CD8-positive, alpha-beta T cell (primary cell): ENCODE measurements at regions of chr1 and their contacts with region 1.

Region 1: DNA sequence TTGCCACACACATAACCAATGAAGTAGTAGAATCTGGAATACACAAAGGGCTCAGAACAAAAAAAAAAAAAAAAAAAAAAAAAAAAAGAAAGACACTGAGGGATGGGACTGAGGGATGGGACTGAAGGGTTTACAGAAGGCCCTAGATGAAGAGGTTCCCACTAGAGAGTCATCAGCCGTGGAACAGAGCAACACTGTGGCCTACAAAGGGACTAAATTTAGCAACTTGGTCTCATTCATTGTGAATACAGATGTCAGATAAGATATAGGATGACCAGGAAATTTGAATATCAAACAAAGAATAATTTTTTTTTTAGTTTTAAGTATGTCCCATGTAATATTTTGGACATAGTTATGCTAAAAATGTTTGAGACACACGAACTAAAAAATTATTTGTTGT is 62.1 kb downstream of the GLUL start:
- DNase-seq: no peak
- ATAC-seq: no peak
- H3K4me3 ChIP-seq: no peak overlapping the region
- H3K4me3 Mint-ChIP-seq: no peak overlapping the region
- H3K27ac ChIP-seq: no peak overlapping the region
- H3K27ac Mint-ChIP-seq: no peak overlapping the region
- H3K4me1 ChIP-seq: no peaks in the 10 kb centered on the region
- H3K4me1 Mint-ChIP-seq: no peaks in the 10 kb centered on the region
- H3K27me3 ChIP-seq: no peaks in the 10 kb centered on the region
- H3K27me3 Mint-ChIP-seq: no peaks in the 10 kb centered on the region
- CTCF ChIP-seq: no peak

Region 2: DNA sequence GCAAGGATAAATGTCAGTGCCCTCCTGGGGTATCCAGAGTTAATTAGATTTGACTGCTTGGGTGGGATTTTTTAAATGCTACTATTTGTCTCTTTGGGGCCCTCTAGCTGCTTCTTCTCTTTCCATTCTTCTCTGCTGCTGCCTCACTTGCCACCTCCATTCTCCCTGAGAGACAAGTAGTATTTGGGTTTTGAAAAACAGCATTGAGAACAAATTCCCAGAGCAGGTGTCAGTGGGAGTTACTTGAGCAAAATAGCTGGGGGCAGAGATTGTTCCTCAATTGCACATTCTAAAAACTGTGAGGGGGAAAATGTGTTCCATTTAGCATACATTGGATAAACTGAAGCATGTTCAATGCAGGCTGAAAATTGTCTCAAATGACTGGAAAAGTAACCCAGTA is 559.6 kb before region 1 on chr1:
- CTCF ChIA-PET with region 1: no interaction called
- POLR2A ChIA-PET with region 1: no interaction called
- intact Hi-C with region 1: loop called in 1 of 2 experiments (anchors 5 kb)
- DNase-seq: no peak
- ATAC-seq: no peak
- H3K4me3 ChIP-seq: no peak overlapping the region
- H3K4me3 Mint-ChIP-seq: no peak overlapping the region
- H3K27ac ChIP-seq: no peak overlapping the region
- H3K27ac Mint-ChIP-seq: no peak overlapping the region
- H3K4me1 ChIP-seq: no peaks in the 10 kb centered on the region
- H3K4me1 Mint-ChIP-seq: no peaks in the 10 kb centered on the region
- H3K27me3 ChIP-seq: no peaks in the 10 kb centered on the region
- H3K27me3 Mint-ChIP-seq: peaks cover 10% of the 10 kb centered on the region
- CTCF ChIP-seq: no peak

Region 3: DNA sequence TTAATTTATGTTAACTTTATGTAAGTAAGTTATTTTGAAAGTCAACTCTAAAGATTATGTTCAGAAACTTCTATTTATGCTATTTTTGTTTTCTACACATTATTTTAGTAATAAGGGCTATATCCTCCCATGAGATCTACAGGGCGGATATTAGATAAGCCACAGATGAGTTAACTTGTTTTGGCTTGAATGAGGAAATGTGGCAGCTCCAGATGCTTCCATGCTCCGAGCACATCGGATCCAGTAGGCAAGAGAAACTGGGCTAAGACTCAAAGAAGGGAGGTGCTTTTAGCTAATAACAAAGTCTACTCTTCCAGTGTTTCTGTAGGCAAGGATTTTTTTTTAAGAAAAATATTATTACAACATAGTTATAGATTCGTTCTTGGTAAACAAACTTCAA is 673.7 kb after region 1 on chr1:
- CTCF ChIA-PET with region 1: no interaction called
- POLR2A ChIA-PET with region 1: no interaction called
- intact Hi-C with region 1: no loop called
- DNase-seq: no peak
- ATAC-seq: no peak
- H3K4me3 ChIP-seq: no peak overlapping the region
- H3K4me3 Mint-ChIP-seq: no peak overlapping the region
- H3K27ac ChIP-seq: no peak overlapping the region
- H3K27ac Mint-ChIP-seq: no peak overlapping the region
- H3K4me1 ChIP-seq: no peaks in the 10 kb centered on the region
- H3K4me1 Mint-ChIP-seq: no peaks in the 10 kb centered on the region
- H3K27me3 ChIP-seq: peaks cover 0 to 4% of the 10 kb centered on the region in 2 experiments
- H3K27me3 Mint-ChIP-seq: peaks cover 40% of the 10 kb centered on the region
- CTCF ChIP-seq: no peak